ENCODE measurements at regions of chr6 and their contacts with region 1.

Region 1: GRCh38 chr6:16409531-16410441 is 171.4 kb downstream of the GMPR start:
- DNase-seq: peak; percentile 82
- H3K4me3 Mint-ChIP-seq: peak overlapping the region; percentile 71
- H3K27ac Mint-ChIP-seq: peak overlapping the region; percentile 81
- H3K4me1 Mint-ChIP-seq: peaks cover 66% of the 10 kb centered on the region
- H3K27me3 Mint-ChIP-seq: no peaks in the 10 kb centered on the region

Region 2: GRCh38 chr6:16128759-16129622 is 280.8 kb before region 1 on chr6 and contains the start of gene MYLIP:
- CTCF ChIA-PET with region 1: no interaction called
- POLR2A ChIA-PET with region 1: no interaction called
- intact Hi-C with region 1: loop called (anchors 10 kb)
- DNase-seq: peak; percentile 98
- H3K4me3 Mint-ChIP-seq: peak within 1 kb of the TSS; percentile 93
- H3K27ac Mint-ChIP-seq: peak within 1 kb of the TSS; percentile 94
- H3K4me1 Mint-ChIP-seq: peaks cover 28% of the 10 kb centered on the region
- H3K27me3 Mint-ChIP-seq: no peaks in the 10 kb centered on the region
- total RNA-seq, gene MYLIP: 11.4 TPM

Region 3: GRCh38 chr6:16345437-16346330 is 64.1 kb before region 1 on chr6:
- CTCF ChIA-PET with region 1: no interaction called
- POLR2A ChIA-PET with region 1: no interaction called
- intact Hi-C with region 1: no loop called
- DNase-seq: no peak
- H3K4me3 Mint-ChIP-seq: no peak overlapping the region
- H3K27ac Mint-ChIP-seq: no peak overlapping the region
- H3K4me1 Mint-ChIP-seq: peaks cover 15% of the 10 kb centered on the region
- H3K27me3 Mint-ChIP-seq: no peaks in the 10 kb centered on the region

Region 4: DNA sequence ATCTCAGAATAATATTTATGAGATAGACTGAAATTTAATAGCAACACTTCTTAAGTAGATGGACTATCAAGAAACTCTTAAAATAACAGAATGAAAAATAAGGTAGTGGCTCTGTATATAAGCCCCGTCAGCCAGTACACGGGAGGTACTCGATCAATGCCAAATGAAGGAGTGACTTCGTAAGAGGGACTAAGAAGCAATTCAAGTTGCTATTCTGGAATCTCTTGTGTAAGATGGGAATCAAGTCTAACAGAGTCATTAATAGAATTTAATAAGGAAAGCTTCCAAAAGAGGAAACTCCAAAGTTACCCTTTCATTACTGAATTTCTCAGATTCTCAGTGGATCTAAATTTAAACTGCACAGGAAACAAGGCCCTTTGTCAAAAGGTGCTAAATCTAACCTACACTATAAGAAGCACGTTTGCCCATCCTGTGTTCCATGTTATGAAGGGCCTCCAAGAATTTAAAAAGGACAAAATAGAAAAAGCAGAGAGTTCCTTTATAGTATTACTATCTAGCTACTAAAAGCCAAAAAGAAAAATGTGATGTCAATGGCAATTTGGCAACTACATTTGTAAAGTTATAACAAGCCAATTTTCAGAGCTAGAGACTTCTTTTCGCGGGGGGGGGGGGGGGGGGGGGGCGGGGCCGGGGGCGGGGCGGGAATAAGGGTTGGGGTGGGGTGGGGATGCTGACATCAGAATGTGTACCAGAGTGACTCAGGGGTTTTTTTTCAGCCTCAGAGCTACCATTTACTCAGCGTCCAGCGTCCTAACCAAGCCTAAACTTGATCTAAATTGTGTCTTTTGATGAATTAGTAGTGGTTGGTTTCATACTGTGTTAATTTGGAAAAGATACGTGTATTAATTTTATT is 29.2 kb after region 1 on chr6:
- CTCF ChIA-PET with region 1: interaction called, 9 read pairs
- POLR2A ChIA-PET with region 1: interaction called, 80 read pairs
- intact Hi-C with region 1: loop called (anchors 1 kb)
- DNase-seq: peak; percentile 62
- H3K4me3 Mint-ChIP-seq: peak overlapping the region; percentile 98
- H3K27ac Mint-ChIP-seq: peak overlapping the region; percentile 100
- H3K4me1 Mint-ChIP-seq: peaks cover 69% of the 10 kb centered on the region
- H3K27me3 Mint-ChIP-seq: no peaks in the 10 kb centered on the region

Region 5: GRCh38 chr6:16471222-16471909 is 61.6 kb after region 1 on chr6:
- CTCF ChIA-PET with region 1: interaction called, 9 read pairs
- POLR2A ChIA-PET with region 1: interaction called, 13 read pairs
- intact Hi-C with region 1: loop called (anchors 1 kb)
- DNase-seq: no peak
- H3K4me3 Mint-ChIP-seq: no peak overlapping the region
- H3K27ac Mint-ChIP-seq: peak overlapping the region; percentile 69
- H3K4me1 Mint-ChIP-seq: peaks cover 88% of the 10 kb centered on the region
- H3K27me3 Mint-ChIP-seq: no peaks in the 10 kb centered on the region

Region 6: DNA sequence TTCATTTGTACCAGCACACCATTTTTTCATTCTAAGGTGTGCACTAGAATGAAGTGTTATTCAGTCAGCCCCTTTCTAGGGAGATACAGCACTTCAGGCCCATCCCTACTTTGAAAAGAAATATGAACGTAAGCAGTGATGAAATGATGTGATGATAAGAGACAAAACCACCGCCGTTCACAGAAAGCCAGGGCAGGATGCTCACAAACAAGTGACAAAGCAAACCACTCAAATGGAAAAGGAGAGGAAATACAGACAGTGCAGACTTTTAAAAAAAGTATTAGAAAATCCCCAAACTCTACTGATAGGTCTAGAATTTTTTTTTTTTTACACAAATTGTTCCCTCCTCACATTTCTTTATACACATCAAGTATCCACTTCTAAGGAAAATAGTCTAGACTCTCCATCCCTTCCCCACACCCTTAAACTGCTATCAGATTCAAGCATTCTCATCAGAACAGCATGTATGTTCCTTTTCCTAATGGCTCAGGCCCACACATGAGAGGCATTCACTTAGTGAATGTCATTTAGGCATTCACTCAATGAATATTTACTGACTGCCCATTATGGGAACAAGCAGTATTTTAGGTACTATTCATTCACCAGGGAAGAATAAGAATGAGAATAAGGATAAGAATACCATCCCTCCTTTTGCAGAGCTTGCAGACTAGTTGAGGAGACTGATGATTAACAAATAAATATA is 72.1 kb after region 1 on chr6:
- CTCF ChIA-PET with region 1: interaction called, 6 read pairs
- POLR2A ChIA-PET with region 1: interaction called, 8 read pairs
- intact Hi-C with region 1: loop called (anchors 1 kb)
- DNase-seq: peak; percentile 76
- H3K4me3 Mint-ChIP-seq: peak overlapping the region; percentile 47
- H3K27ac Mint-ChIP-seq: peak overlapping the region; percentile 87
- H3K4me1 Mint-ChIP-seq: peaks cover 93% of the 10 kb centered on the region
- H3K27me3 Mint-ChIP-seq: no peaks in the 10 kb centered on the region

Region 7: GRCh38 chr6:16591396-16592222 is 181.8 kb after region 1 on chr6:
- CTCF ChIA-PET with region 1: no interaction called
- POLR2A ChIA-PET with region 1: no interaction called
- intact Hi-C with region 1: loop called (anchors 2 kb)
- DNase-seq: peak; percentile 72
- H3K4me3 Mint-ChIP-seq: peak overlapping the region; percentile 39
- H3K27ac Mint-ChIP-seq: peak overlapping the region; percentile 78
- H3K4me1 Mint-ChIP-seq: peaks cover 43% of the 10 kb centered on the region
- H3K27me3 Mint-ChIP-seq: no peaks in the 10 kb centered on the region

Region 8: DNA sequence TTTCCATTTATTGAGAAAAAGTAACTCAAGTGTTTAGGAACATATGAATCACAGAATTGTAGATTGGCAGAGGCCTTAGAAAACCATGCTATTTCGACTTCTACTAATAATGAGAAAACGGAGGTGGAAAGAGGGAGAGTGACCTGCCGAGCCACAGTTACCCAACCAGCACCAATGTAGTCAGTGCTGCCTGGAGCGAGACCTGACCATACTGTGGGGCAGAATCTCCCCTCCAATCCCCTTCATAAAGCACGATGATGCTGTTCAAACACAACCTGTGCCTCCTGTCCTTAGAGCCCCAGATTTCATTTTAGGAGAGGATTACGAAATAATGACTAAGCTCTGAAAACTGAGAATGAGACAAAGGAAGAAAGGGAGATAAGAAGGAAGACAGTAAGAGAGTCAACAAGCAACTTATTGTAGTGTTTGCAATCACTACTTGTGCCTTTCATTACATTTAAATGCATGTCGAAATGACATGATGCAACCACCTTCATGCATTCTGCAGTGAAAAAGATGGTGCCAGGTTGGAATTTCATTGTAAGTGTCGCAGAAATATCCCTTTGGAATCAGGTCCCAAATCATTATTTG is 280.9 kb after region 1 on chr6:
- CTCF ChIA-PET with region 1: no interaction called
- POLR2A ChIA-PET with region 1: interaction called, 4 read pairs
- intact Hi-C with region 1: loop called (anchors 1 kb)
- DNase-seq: peak; percentile 82
- H3K4me3 Mint-ChIP-seq: peak overlapping the region; percentile 51
- H3K27ac Mint-ChIP-seq: peak overlapping the region; percentile 90
- H3K4me1 Mint-ChIP-seq: peaks cover 93% of the 10 kb centered on the region
- H3K27me3 Mint-ChIP-seq: no peaks in the 10 kb centered on the region